Psoas muscle (tissue), 8 donors: ENCODE measurements at regions of chr3 and their contacts with region 1.

Region 1: GRCh38 chr3:32467333-32468070 is 35.1 kb downstream of the CMTM6 start:
- DNase-seq: peak; percentile 68 to 84
- ATAC-seq: peak; percentile 91 to 98 (median 96)
- H3K4me3 ChIP-seq: peak overlapping the region; percentile 64
- H3K27ac ChIP-seq: no peak overlapping the region
- H3K4me1 ChIP-seq: no peaks in the 10 kb centered on the region
- H3K27me3 ChIP-seq: no peaks in the 10 kb centered on the region
- CTCF ChIP-seq: peak; percentile 100

Region 2: DNA sequence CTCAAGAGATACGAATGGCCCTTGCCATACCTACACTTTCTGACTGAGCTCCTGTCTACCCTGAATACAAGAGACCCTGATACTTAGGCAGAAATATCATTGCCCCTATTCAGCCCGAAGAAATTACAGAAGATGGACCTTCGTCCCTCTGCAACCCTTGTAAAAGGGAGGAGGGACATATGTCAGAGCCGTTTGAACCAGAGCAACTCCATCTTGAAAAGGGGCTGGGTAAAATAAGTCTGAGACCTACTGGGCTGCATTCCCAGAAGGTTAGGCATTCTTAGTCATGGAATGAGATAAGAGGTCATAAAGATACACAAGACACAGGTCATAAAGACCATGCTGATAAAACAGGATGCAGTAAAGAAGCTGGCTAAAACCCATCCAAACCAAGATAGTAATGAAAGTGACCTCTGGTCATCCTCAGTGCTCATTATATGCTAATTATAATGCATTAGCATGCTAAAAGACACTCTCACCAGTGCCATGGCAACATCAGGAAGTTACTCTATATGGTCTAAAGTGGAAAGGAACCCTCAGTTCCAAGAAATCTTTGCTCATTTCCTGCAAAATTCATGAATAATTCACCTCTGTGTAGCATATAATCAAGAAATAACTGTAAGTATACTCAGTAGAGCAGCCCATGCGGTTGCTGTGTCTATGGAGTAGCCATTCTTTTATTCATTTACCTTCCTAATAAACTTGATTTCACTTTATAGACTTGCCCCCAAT is 410.8 kb before region 1 on chr3:
- intact Hi-C with region 1: no loop called
- DNase-seq: no peak
- ATAC-seq: no peak
- H3K4me3 ChIP-seq: no peak overlapping the region
- H3K27ac ChIP-seq: no peak overlapping the region
- H3K4me1 ChIP-seq: peaks cover 6% of the 10 kb centered on the region
- H3K27me3 ChIP-seq: no peaks in the 10 kb centered on the region
- CTCF ChIP-seq: no peak

Region 3: DNA sequence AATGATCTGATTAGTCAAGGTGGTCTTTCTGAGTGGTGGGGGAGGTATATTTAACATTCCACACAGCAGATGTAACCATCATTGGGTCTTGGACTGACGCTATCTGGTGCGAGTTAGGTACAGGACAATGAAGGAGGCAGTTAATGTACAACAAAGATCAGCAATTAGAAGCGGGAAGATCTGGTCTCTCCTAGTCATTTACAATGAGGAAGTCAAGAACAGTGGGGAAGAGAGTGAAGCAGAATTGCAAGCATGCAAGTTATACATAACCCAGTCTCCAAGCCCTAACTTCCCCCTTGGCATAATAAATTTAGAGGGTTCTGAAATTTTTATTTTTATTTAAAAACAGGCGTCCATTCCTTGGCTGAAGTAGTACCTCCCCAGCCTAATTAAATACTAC is 347.0 kb before region 1 on chr3:
- intact Hi-C with region 1: no loop called
- DNase-seq: no peak
- ATAC-seq: no peak
- H3K4me3 ChIP-seq: no peak overlapping the region
- H3K27ac ChIP-seq: no peak overlapping the region
- H3K4me1 ChIP-seq: peaks cover 47% of the 10 kb centered on the region
- H3K27me3 ChIP-seq: no peaks in the 10 kb centered on the region
- CTCF ChIP-seq: no peak

Region 4: DNA sequence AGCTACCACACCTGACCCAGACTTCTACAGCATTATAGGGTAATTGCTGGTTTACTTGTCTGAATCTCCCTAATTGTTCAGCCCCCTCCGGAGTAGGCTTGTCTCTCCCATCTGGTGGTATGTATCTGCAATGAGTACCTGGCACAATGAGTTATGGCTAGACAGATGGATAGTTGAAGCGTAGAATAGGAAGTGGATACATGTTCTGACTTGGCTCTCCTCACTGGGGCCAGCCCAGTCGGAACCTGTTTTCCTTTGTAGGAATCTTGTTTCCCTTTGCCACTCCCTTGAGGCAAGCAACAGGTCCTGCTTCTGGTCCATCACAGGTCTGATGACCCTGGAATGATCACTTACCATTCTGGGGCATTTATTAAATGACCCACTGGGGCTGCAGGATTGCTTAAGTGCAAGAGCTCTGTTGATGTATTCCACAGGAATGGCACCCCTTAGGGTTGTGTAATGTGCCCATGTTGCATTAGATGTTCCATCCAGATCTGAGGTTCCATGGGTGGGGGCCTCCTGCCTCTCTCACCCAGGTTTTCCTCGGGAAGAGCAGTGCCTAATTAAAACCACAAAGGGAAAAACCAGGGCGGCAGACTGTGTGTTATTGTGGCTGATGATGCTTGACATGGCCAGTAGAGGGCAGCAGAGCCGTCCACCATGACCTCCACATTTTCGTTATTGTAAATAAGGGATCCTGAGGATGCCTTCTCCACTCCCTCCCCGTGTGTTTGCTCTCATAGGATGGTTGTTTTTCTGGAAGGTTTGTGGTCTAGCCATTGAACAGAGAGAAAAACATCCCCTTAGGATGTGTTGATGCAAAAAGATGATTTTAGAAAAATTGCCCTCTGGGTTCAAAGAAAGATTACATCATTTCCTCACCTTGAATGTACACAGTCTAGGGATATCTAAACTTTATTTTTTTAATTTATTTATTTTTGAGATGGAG is 171.0 kb before region 1 on chr3:
- intact Hi-C with region 1: loop called (anchors 5 kb)
- DNase-seq: peak; percentile 42 to 55
- ATAC-seq: peak; percentile 64 to 85 (median 72)
- H3K4me3 ChIP-seq: no peak overlapping the region
- H3K27ac ChIP-seq: no peak overlapping the region
- H3K4me1 ChIP-seq: no peaks in the 10 kb centered on the region
- H3K27me3 ChIP-seq: no peaks in the 10 kb centered on the region
- CTCF ChIP-seq: peak; percentile 82

Region 5: GRCh38 chr3:32374788-32375595 is 92.5 kb before region 1 on chr3:
- intact Hi-C with region 1: loop called (anchors 2 to 5 kb)
- DNase-seq: no peak
- ATAC-seq: peak; percentile 58 to 76 (median 59)
- H3K4me3 ChIP-seq: no peak overlapping the region
- H3K27ac ChIP-seq: no peak overlapping the region
- H3K4me1 ChIP-seq: no peaks in the 10 kb centered on the region
- H3K27me3 ChIP-seq: no peaks in the 10 kb centered on the region
- CTCF ChIP-seq: peak; percentile 75

Region 6: DNA sequence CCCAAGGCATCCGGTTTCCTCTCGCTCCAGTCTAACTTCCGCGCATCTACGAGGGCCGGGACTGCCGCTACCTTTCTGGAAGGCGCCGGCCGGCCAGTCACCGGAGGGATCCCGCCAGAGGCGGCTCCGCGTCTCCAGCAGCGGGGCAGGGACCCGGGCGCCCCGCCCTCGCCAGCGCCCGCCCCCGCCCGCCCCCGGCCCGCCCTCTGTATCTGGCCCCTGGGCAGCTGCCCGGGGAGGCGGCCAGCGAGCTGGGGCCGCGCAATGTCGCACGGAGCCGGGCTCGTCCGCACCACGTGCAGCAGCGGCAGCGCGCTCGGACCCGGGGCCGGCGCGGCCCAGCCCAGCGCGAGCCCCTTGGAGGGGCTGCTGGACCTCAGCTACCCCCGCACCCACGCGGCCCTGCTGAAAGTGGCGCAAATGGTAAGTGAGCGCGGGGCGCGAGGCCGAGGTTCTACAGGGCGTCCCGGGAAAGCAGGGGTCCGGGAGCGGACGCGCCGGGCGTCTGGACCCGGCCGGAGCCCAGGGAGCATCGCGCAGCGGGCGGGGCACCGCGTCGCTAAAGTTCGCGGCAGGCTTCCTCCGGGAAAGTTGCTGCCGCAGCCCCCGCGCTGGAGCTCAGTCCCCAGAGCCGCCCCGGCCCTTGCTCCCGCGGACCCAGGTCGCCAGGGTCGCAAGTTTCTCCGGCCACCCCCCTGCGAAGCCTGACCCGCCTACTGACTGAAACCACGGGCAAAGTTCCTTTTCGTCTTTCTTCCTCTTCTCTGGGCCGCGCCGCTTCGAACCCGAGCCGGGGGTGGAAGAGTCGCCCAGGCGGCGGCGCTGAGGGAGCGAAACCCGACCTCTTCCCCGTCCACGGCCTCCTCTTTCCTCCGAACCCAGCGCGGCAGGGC is 75.6 kb before region 1 on chr3 and contains the start of gene CMTM7:
- intact Hi-C with region 1: loop called in 1 of 2 experiments (anchors 5 kb)
- DNase-seq: peak; percentile 71 to 79
- ATAC-seq: peak; percentile 80 to 88 (median 86)
- H3K4me3 ChIP-seq: peak within 1 kb of the TSS; percentile 83
- H3K27ac ChIP-seq: peak within 1 kb of the TSS; percentile 67
- H3K4me1 ChIP-seq: no peaks in the 10 kb centered on the region
- H3K27me3 ChIP-seq: no peaks in the 10 kb centered on the region
- CTCF ChIP-seq: no peak
- total RNA-seq, gene CMTM7: 2.6 to 18.5 (median 6.1) TPM

Region 7: DNA sequence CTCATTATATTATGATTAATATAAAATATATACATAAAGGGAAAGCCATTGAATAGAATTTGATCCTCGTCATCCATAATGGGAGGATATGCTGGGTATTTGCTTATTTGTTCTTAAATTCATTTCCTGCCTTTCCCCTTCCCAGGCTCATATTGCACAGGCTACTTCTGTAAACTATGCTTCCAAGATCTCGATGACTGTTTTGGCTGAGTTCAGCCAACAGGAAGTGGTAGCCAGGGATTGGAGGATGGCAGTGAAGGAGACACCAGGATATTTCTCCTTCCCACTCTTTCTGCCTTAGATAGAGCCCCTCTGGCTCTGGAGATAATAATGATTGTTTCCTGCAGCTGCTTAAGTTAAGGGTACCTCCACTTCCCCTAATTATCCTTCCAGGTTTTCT is 147.5 kb after region 1 on chr3:
- intact Hi-C with region 1: no loop called
- DNase-seq: no peak
- ATAC-seq: no peak
- H3K4me3 ChIP-seq: no peak overlapping the region
- H3K27ac ChIP-seq: no peak overlapping the region
- H3K4me1 ChIP-seq: no peaks in the 10 kb centered on the region
- H3K27me3 ChIP-seq: no peaks in the 10 kb centered on the region
- CTCF ChIP-seq: no peak